Heart left ventricle (tissue), 16 donors: ENCODE measurements at regions of chr2 and their contacts with region 1.

Region 1: DNA sequence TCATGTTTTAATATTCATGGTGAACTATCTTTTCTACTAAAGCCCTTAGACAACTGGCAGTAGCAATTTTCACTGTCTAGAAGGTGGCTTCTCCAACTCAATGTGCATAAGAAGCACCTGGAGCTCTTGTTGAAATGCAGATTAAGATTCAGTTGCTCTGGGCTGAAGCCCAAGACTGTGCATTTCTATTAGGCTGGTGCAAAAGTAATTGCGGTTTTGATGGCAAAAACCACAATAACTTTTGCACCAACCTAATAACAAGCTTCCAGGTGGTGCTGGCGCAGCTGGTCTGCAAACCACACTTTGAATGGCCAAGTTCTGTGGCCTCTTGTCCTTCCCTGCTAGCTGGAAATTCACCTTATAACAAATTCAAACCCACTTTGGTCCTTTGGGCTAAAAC is 26.7 kb upstream of the VPS54 start:
- DNase-seq: no peak
- ATAC-seq: no peak
- H3K4me3 ChIP-seq: no peak overlapping the region
- H3K27ac ChIP-seq: no peak overlapping the region
- H3K4me1 ChIP-seq: peaks cover 0 to 7% (median 0%) of the 10 kb centered on the region in 12 donors
- H3K27me3 ChIP-seq: no peaks in the 10 kb centered on the region
- CTCF ChIP-seq: no peak
- POLR2A ChIP-seq: no peak

Region 2: DNA sequence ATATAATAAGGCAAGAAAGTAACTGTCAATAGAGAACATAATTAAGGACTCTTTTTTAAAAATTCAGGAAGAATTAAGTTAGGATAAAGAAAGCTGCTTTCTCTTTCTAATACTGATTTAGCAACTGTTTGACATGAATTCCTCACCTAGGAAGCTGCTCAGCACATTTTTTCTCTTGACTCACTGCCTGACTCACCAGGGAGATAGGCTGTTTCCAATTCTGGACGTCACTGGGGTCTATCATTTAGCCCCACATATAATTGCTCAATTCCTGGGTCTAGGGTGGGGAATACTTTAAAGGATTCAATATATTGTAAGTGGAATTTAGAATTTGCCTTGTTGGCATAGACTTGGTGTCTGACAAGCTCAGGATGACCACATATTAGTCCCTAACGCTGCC is 255.0 kb before region 1 on chr2:
- intact Hi-C with region 1: no loop called
- DNase-seq: no peak
- ATAC-seq: peak in 3 of 4 donors; percentile 45 to 81 (median 72)
- H3K4me3 ChIP-seq: no peak overlapping the region
- H3K27ac ChIP-seq: peak overlapping the region in 2 of 12 donors; percentile 16 to 70
- H3K4me1 ChIP-seq: peaks cover 0 to 26% (median 1%) of the 10 kb centered on the region in 12 donors
- H3K27me3 ChIP-seq: no peaks in the 10 kb centered on the region
- CTCF ChIP-seq: no peak
- POLR2A ChIP-seq: no peak

Region 3: GRCh38 chr2:64474121-64474571 is 428.2 kb after region 1 on chr2:
- intact Hi-C with region 1: loop called in 1 of 10 experiments (anchors 5 kb)
- DNase-seq: no peak
- ATAC-seq: no peak
- H3K4me3 ChIP-seq: no peak overlapping the region
- H3K27ac ChIP-seq: no peak overlapping the region
- H3K4me1 ChIP-seq: no peaks in the 10 kb centered on the region
- H3K27me3 ChIP-seq: no peaks in the 10 kb centered on the region
- CTCF ChIP-seq: no peak
- POLR2A ChIP-seq: no peak